Posterior vena cava (tissue), 2 donors: ENCODE measurements at regions of chr1 and their contacts with region 1.

Region 1: GRCh38 chr1:40774266-40774998 is 9.2 kb upstream of the KCNQ4 start:
- DNase-seq: no peak

Region 2: GRCh38 chr1:40711465-40712404 is 62.7 kb before region 1 on chr1:
- intact Hi-C with region 1: loop called in 1 of 2 experiments (anchors 10 kb)
- DNase-seq: no peak